ENCODE measurements at regions of chr1 and their contacts with region 1.

Region 1: DNA sequence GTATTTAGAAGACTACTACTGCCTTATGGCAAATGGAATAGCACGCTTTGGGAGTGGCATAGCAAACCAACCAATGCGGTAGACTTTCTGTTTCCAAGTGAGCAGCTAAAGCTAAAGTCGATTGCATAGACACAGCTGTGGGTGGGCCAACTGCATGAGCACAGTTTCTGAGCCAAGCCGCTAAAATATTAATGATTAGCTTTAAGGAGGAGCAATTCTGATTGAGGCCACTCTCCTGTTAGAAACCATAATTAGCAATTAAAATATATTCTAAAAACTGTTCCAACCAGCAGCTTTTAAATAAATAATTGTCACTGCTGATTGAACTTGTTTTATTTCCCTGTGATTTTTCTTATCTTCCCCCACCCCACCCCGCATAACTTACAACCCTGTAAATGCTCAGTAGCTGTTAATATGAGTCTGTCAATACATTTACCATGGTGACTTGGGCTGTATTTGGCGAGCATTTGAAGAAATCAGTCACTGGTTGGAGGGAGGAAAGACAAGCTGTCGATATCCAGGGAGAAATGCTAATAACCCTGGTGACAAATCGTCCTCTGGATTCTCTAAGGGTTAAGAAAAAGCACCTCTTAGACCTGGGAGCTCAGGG is 32.2 kb downstream of the RNF220 start:
- DNase-seq: no peak
- ATAC-seq: no peak
- H3K4me3 ChIP-seq: no peak overlapping the region
- H3K27ac ChIP-seq: no peak overlapping the region
- H3K4me1 ChIP-seq: no peaks in the 10 kb centered on the region
- H3K27me3 ChIP-seq: no peaks in the 10 kb centered on the region; a peak in 2 of 4 replicates
- CTCF ChIP-seq: no peak
- EP300 ChIP-seq: no peak
- POLR2A ChIP-seq: no peak
- RAD21 ChIP-seq: no peak

Region 2: DNA sequence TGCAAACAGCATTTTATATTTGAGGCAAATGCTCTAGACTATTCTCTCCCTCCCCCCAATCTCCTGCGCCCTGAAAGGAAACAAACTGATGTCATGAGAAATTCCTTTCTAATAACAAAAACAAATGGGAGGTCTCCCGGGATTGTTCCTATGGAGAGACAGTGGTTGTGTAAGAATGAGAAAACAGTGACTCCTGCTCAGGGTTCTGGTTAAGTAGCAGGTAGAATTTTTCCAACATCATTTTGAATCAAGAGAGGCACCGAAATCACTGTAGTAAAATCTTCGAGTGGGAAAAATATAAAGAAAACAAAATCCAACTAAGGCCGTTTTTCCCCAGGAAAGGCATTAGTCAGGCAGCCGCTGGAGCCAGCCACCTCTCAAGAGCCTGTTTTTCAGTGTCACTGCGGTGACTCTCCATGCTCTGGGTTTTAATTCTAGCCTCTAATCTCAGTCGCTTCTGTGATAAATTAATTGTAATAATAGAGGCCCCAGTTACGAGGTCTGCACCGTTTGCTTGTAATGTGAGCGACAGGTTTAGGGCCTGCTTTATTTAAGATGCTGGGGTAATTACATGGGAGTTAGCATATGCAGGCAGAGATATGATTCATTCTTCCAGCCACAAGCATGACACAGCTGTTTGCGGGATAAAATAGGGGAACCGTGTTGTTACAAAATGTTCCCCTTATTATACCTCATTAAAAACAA is 48.2 kb after region 1 on chr1:
- CTCF ChIA-PET with region 1: no interaction called
- POLR2A ChIA-PET with region 1: no interaction called
- RAD21 ChIA-PET with region 1: no interaction called
- SMC1A ChIA-PET with region 1: no interaction called
- in situ Hi-C with region 1: loop called (anchors 5 kb)
- intact Hi-C with region 1: no loop called
- DNase-seq: no peak
- ATAC-seq: peak; percentile 22; the same call in 2 of the 3 replicates
- H3K4me3 ChIP-seq: no peak overlapping the region
- H3K27ac ChIP-seq: no peak overlapping the region
- H3K4me1 ChIP-seq: no peaks in the 10 kb centered on the region
- H3K27me3 ChIP-seq: peaks cover 0 to 2% of the 10 kb centered on the region in 2 experiments; a peak in 2 of 4 replicates
- CTCF ChIP-seq: no peak
- EP300 ChIP-seq: no peak
- POLR2A ChIP-seq: no peak
- RAD21 ChIP-seq: no peak

Region 3: GRCh38 chr1:44616991-44617702 is 179.9 kb after region 1 on chr1:
- CTCF ChIA-PET with region 1: no interaction called
- POLR2A ChIA-PET with region 1: no interaction called
- RAD21 ChIA-PET with region 1: no interaction called
- SMC1A ChIA-PET with region 1: no interaction called
- in situ Hi-C with region 1: no loop called
- intact Hi-C with region 1: no loop called
- DNase-seq: no peak
- ATAC-seq: no peak
- H3K4me3 ChIP-seq: no peak overlapping the region
- H3K27ac ChIP-seq: no peak overlapping the region
- H3K4me1 ChIP-seq: no peaks in the 10 kb centered on the region
- H3K27me3 ChIP-seq: no peaks in the 10 kb centered on the region; a peak in 3 of 4 replicates
- CTCF ChIP-seq: no peak
- EP300 ChIP-seq: no peak
- POLR2A ChIP-seq: no peak
- RAD21 ChIP-seq: no peak

Measured in GM12878 (cell line).